ENCODE measurements at regions of chr2 and their contacts with region 1.

Region 1: GRCh38 chr2:45494269-45494977 is 116.6 kb downstream of the SRBD1 start:
- DNase-seq: peak; percentile 45
- CTCF ChIP-seq: peak; percentile 54

Region 2: GRCh38 chr2:44974064-44974715 is 520.2 kb before region 1 on chr2:
- CTCF ChIA-PET with region 1: interaction called, 187 read pairs
- POLR2A ChIA-PET with region 1: no interaction called
- DNase-seq: no peak
- CTCF ChIP-seq: peak; percentile 27

Region 3: DNA sequence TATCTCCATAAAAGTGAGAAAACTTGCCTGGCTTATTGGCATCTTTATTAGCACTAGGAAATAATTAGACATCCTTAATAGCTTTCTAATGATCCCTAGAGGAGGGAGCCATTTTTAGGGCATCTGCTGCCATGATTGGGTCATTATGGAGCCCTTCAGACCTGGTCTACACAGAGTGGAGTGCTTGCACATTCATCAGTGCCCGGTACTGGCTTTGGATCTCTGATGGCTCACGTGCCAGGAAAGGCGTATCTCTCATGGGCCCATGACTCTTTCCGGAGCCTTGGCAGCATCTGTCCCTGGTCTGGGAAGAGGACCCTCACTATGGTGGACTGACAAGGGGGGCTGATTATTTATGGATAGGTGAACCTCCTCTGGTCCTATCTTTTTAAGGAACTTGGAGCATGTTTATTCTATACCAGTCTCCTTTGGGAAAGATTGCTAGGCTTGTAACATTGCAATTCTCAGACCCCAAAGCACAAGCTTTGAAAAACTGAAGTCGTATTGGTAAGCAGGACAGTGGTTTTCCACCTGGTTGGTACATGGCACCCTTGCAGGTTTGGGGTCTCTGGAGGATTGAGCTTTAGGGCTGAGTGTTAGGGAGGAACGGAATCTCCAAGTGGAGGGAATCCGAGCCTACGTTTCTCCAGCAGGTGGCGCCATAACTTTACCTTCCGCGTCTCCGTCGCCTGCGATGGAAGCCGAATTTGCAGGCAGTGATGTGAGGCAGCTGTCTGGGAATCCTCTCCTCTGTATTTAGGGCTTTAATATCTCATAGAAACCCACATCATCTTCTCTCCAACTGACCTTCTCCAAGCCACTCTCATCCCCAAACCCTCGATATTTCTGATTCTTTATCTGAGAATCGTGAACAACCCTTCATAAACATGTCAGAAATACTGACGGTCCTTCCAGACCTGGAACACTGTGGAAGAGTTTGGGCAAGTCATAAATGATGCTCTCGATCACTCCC is 513.0 kb before region 1 on chr2:
- CTCF ChIA-PET with region 1: interaction called, 187 read pairs
- POLR2A ChIA-PET with region 1: no interaction called
- DNase-seq: peak; percentile 75
- CTCF ChIP-seq: peak; percentile 81

Region 4: GRCh38 chr2:45477546-45477945 is 16.9 kb before region 1 on chr2:
- CTCF ChIA-PET with region 1: interaction called, 18 read pairs
- POLR2A ChIA-PET with region 1: no interaction called
- DNase-seq: no peak
- CTCF ChIP-seq: no peak

Region 5: DNA sequence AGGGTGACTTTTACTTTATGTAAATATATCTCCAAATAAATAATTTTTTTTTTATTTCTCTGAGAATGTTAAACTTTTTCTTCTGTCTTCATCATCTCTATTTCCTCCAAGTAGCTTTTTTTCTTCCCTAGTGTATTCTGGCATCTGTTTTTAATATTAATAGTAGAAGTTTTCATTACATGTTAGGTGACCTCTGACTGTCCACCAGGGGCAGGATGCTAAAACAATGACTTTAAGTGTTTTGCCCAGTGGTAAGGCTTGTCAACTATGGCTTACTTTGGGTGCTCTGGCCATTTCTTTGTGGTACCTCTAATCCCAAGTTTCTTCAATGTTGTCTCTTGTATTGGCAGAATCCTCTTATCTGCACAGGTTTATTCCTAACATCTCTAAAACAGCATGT is 10.4 kb before region 1 on chr2:
- CTCF ChIA-PET with region 1: interaction called, 31 read pairs
- POLR2A ChIA-PET with region 1: no interaction called
- DNase-seq: no peak
- CTCF ChIP-seq: peak; percentile 3

Region 6: GRCh38 chr2:45505138-45505537 is 10.7 kb after region 1 on chr2:
- CTCF ChIA-PET with region 1: interaction called, 33 read pairs
- POLR2A ChIA-PET with region 1: no interaction called
- DNase-seq: no peak
- CTCF ChIP-seq: no peak

Region 7: GRCh38 chr2:45510701-45511420 is 16.4 kb after region 1 on chr2:
- CTCF ChIA-PET with region 1: interaction called, 33 read pairs
- POLR2A ChIA-PET with region 1: no interaction called
- DNase-seq: no peak
- CTCF ChIP-seq: no peak